Activated T-helper 2 cell treated with anti-CD3 and anti-CD28 coated beads, Interferon-gamma antibody, Interleukin-2, Interleukin-4, amounts not matched to agents 10 μg/mL and 5 μg/mL and 100 μg/mL, durations not matched to agents 14 hours and 24 hours and 36 hours (primary cell): ENCODE measurements at regions of chr5 and their contacts with region 1.

Region 1: GRCh38 chr5:101658433-101658832 is 637.7 kb downstream of the SLCO4C1 start:
- DNase-seq: no peak
- H3K4me3 Mint-ChIP-seq: no peak overlapping the region
- H3K27ac Mint-ChIP-seq: no peak overlapping the region
- H3K4me1 Mint-ChIP-seq: no peaks in the 10 kb centered on the region
- H3K27me3 Mint-ChIP-seq: no peaks in the 10 kb centered on the region

Region 2: GRCh38 chr5:100970706-100971270 is 687.6 kb before region 1 on chr5:
- intact Hi-C with region 1: no loop called
- DNase-seq: no peak
- H3K4me3 Mint-ChIP-seq: no peak overlapping the region
- H3K27ac Mint-ChIP-seq: no peak overlapping the region
- H3K4me1 Mint-ChIP-seq: no peaks in the 10 kb centered on the region
- H3K27me3 Mint-ChIP-seq: peaks cover 31% of the 10 kb centered on the region

Region 3: DNA sequence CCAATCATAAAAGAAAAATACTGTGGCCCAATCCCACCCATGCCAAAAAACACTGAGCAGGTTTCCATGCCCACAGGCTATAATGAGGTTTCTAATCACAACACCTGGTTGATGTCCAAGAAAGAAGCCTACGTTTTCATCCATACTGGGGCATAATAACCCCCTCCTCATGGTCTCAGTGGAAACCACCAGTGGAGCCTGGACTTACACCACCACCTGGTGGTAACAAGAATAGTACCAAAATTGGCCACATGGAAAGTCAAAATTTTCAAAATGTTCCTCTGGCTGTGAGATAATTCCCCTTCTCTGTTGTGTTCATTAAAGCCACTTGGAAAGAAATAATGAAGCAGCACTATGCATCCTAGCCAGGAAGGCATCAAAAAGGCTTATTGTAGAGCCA is 68.0 kb before region 1 on chr5:
- intact Hi-C with region 1: no loop called
- DNase-seq: no peak
- H3K4me3 Mint-ChIP-seq: no peak overlapping the region
- H3K27ac Mint-ChIP-seq: no peak overlapping the region
- H3K4me1 Mint-ChIP-seq: no peaks in the 10 kb centered on the region
- H3K27me3 Mint-ChIP-seq: no peaks in the 10 kb centered on the region

Region 4: GRCh38 chr5:101675510-101676219 is 17.2 kb after region 1 on chr5:
- intact Hi-C with region 1: loop called (anchors 1 kb)
- DNase-seq: no peak
- H3K4me3 Mint-ChIP-seq: no peak overlapping the region
- H3K27ac Mint-ChIP-seq: no peak overlapping the region
- H3K4me1 Mint-ChIP-seq: no peaks in the 10 kb centered on the region
- H3K27me3 Mint-ChIP-seq: no peaks in the 10 kb centered on the region